T-cell (primary cell): ENCODE measurements at regions of chr9 and their contacts with region 1.

Region 1: DNA sequence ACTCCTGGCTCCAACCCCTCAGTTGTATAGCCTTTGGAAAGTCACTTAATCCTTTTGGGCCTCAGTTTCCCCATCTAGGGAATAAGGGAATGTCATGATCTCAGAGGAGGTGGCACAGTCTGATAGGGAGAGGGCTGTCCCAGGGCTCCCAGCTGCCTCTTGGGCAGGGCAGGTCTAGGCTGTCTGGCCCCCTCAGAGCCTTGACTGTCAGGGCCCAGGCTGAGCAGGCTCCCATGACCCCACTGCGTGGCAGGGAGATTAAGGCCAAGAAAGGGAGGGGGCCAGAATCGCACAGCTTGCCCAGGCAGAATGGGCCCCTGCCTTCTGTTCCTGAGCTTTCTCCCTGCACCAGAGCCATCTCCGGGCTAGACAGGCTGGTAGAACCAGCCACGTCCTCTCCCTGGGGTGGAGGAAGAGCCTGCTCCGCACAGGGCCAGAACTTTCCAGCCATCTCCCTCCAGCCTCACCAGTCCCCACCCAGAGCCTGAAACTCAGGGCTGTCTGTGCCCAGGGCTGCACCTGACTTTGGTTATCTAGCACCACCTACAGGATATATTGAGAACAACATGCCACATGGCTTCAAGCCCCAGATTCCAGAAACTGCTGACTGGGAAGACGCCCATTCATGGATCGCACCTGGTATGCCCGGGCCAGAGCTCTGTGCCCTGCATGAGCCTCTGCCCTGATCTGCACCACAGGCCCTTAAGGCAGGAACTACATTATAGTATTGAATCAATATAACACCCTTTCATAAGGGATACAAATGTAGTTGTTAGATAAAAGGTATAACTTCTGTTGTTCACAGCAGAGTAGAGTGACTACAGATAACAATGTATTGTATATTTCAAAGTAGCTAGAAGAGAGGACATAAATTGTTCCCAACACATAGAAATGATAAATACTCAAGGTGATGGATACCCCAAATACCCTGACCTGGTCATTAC is 32.0 kb downstream of the NAIF1 start:
- DNase-seq: peak; percentile 32 to 90 (median 55)
- ATAC-seq: peak; percentile 57 to 66 (median 60)
- H3K4me3 ChIP-seq: no peak overlapping the region
- H3K4me3 Mint-ChIP-seq: peak overlapping the region in 2 of 3 donors; percentile 53 to 55
- H3K27ac ChIP-seq: peak overlapping the region; percentile 20
- H3K27ac Mint-ChIP-seq: peak overlapping the region; percentile 87 to 90
- H3K4me1 ChIP-seq: peaks cover 30 to 53% of the 10 kb centered on the region in 2 experiments
- H3K4me1 Mint-ChIP-seq: peaks cover 27 to 45% (median 39%) of the 10 kb centered on the region in 3 donors
- H3K27me3 ChIP-seq: no peaks in the 10 kb centered on the region
- H3K27me3 Mint-ChIP-seq: no peaks in the 10 kb centered on the region

Region 2: DNA sequence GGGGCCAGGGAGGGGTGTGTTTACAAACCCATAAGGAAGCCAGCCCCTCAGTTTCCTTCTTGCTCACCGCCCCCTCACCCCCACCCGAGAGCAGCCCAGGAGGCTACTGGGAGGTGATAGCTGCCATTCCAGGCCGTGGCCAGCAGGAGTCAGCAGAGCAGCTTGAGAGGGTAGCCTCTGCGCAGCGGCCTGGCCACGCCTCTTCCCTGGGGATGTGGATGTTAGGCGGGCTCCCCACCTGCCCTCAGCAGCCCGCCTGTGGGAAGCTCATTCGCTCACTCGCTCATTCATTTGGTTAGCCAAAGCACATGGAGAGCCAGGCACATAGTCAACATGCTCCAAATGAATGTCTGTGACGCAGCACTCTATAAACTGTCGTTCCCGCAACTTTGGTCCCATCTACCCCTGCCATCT is 91.4 kb before region 1 on chr9:
- CTCF ChIA-PET with region 1: interaction called, 15 to 29 read pairs
- POLR2A ChIA-PET with region 1: interaction called in 1 of 2 experiments, 6 read pairs
- DNase-seq: peak; percentile 47 to 86 (median 67)
- ATAC-seq: peak; percentile 69 to 77 (median 69)
- H3K4me3 ChIP-seq: no peak overlapping the region
- H3K4me3 Mint-ChIP-seq: peak overlapping the region in 1 of 3 donors; percentile 3
- H3K27ac ChIP-seq: peak overlapping the region; percentile 16
- H3K27ac Mint-ChIP-seq: peak overlapping the region; percentile 74 to 78
- H3K4me1 ChIP-seq: peaks cover 2 to 62% of the 10 kb centered on the region in 2 experiments
- H3K4me1 Mint-ChIP-seq: peaks cover 44 to 52% (median 50%) of the 10 kb centered on the region in 3 donors
- H3K27me3 ChIP-seq: no peaks in the 10 kb centered on the region
- H3K27me3 Mint-ChIP-seq: no peaks in the 10 kb centered on the region

Region 3: DNA sequence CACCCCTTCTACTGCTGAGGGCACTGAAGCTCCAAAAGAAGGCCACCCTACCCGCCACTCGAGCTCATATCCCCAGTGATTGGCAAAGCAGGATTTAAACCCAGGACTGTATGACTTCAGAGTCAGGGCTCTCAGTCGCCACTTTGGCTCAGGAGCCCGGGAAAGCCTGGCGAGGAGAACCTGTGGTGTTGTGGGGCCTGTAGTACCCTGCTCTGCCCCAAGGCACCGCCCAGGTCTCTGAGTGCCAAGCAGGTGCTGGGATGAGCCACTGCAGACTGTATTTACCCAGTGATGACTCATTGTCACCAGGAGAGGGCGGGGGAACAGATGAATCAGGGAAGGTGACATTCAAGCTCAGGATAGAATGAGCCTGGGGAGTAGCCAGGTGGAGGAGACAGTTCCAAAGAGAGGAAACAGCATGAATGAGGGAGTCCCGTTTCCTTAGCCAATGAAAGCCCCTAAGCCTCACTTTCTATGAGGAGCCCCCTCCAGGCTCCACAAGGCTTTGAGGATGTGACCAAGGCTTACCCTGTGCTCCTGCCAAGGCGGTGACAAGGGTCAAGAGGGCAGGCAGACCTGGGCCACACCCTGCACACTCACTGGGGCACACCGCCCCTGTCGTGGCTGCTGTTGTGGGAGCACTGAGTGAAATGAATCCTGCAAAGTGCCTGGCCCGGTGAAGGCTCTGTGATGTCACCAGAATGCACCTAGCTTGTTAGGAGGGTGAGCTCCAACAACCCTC is 79.6 kb before region 1 on chr9:
- CTCF ChIA-PET with region 1: interaction called, 31 to 81 read pairs
- POLR2A ChIA-PET with region 1: interaction called in 1 of 2 experiments, 4 read pairs
- DNase-seq: peak; percentile 47 to 85 (median 70)
- ATAC-seq: peak; percentile 83 to 90 (median 86)
- H3K4me3 ChIP-seq: peak overlapping the region; percentile 4 to 54
- H3K4me3 Mint-ChIP-seq: peak overlapping the region; percentile 67 to 81 (median 74)
- H3K27ac ChIP-seq: peak overlapping the region; percentile 44
- H3K27ac Mint-ChIP-seq: peak overlapping the region; percentile 87 to 94
- H3K4me1 ChIP-seq: peaks cover 66 to 85% of the 10 kb centered on the region in 2 experiments
- H3K4me1 Mint-ChIP-seq: peaks cover 90 to 96% (median 95%) of the 10 kb centered on the region in 3 donors
- H3K27me3 ChIP-seq: no peaks in the 10 kb centered on the region
- H3K27me3 Mint-ChIP-seq: no peaks in the 10 kb centered on the region

Region 4: GRCh38 chr9:127979333-127980110 is 55.6 kb before region 1 on chr9:
- CTCF ChIA-PET with region 1: interaction called, 3 to 10 read pairs
- POLR2A ChIA-PET with region 1: interaction called in 1 of 2 experiments, 4 read pairs
- DNase-seq: peak in 3 of 35 experiments; percentile 35 to 52 (median 41)
- ATAC-seq: no peak
- H3K4me3 ChIP-seq: peak overlapping the region; percentile 90 to 98
- H3K4me3 Mint-ChIP-seq: peak overlapping the region; percentile 91 to 97 (median 96)
- H3K27ac ChIP-seq: peak overlapping the region; percentile 67
- H3K27ac Mint-ChIP-seq: peak overlapping the region; percentile 88 to 97
- H3K4me1 ChIP-seq: peaks cover 28 to 91% of the 10 kb centered on the region in 2 experiments
- H3K4me1 Mint-ChIP-seq: peaks cover 45 to 58% (median 54%) of the 10 kb centered on the region in 3 donors
- H3K27me3 ChIP-seq: no peaks in the 10 kb centered on the region
- H3K27me3 Mint-ChIP-seq: no peaks in the 10 kb centered on the region

Region 5: GRCh38 chr9:128020692-128021091 is 14.4 kb before region 1 on chr9:
- CTCF ChIA-PET with region 1: interaction called, 3 to 11 read pairs
- POLR2A ChIA-PET with region 1: no interaction called
- DNase-seq: no peak
- ATAC-seq: no peak
- H3K4me3 ChIP-seq: no peak overlapping the region
- H3K4me3 Mint-ChIP-seq: peak overlapping the region in 1 of 3 donors; percentile 89
- H3K27ac ChIP-seq: peak overlapping the region; percentile 54
- H3K27ac Mint-ChIP-seq: peak overlapping the region; percentile 97 to 98
- H3K4me1 ChIP-seq: peaks cover 40 to 69% of the 10 kb centered on the region in 2 experiments
- H3K4me1 Mint-ChIP-seq: peaks cover 61 to 68% (median 65%) of the 10 kb centered on the region in 3 donors
- H3K27me3 ChIP-seq: no peaks in the 10 kb centered on the region
- H3K27me3 Mint-ChIP-seq: no peaks in the 10 kb centered on the region